ENCODE measurements at regions of chr20 and their contacts with region 1.

Region 1: GRCh38 chr20:31670371-31671228 is 32.9 kb downstream of the COX4I2 start:
- DNase-seq: peak; percentile 80
- ATAC-seq: peak; percentile 65

Region 2: DNA sequence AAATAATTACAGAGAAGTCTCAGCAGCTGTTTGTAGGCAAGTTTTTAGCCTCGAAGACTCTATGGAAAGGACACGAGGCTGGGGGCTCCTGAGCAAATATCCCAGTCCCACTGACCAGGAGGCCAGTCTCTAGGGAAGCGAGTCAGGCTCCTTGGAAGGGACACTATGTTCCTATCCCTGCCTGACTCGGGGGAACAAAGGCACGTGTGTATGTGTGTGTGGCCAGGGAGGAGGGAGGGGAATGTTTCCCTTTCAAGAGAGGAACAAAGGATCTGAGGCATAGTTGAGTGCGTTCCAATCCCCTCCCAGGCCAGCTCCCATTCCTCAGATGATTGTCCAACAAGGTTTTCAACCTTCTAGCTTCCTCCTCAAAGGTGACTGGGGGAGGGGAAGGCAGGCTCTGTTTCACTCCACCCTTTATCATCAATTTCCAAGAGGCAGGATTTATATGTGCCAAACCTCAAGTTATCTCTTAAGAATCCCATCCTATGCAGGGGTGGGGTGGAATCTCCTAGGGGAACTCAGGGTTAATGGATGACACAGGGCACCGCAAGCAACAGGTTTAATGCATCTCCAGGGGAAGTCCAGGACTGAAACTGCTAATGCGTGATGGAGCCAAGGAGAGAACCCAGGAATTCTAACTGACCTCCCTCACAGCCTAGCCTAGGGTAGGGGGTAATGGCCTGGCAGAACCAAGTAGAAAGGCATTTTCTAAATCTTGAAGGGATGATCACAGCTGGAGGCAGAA is 42.1 kb after region 1 on chr20:
- intact Hi-C with region 1: loop called (anchors 1 kb)
- DNase-seq: peak; percentile 84
- ATAC-seq: peak; percentile 91

Measured in Right ventricle myocardium inferior (tissue), 1 donor.